ENCODE measurements at regions of chr7 and their contacts with region 1.

Region 1: DNA sequence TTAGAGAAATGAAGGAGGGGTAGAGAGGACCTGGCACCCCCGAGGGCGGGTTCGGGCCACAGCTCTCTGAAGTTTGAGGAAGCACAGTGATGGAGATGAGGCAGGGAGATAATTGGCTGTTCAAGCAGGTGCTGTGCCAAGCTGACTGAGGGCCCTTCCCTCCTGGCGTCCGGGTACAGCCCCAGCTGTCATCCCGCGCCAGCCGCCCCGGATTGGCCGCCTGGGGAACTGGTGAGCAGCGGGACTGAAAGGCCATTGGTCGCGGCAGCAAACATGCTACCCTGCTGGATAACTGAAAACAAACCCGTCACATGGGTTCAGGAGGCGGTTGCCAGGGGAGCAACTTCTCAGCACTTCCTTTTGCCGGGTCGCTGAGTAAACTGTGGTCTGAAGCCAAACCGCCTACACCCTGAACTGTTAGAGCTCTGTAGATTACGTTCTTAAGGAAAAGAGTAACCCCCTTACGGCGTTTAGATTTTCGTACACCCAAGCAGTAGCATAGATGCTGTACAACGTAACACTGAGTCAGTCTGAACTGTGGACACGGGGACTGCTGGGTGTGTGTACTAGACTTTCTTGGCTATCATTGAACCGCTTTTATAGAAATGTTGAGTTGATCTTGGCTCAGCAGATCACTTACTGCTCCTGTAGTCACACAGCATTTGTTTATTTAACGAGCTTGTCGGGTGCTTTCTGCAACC is 1.3 kb downstream of the INSIG1 start:
- DNase-seq: peak; percentile 92 to 96 (median 95)
- ATAC-seq: peak; percentile 85 to 92 (median 88)
- H3K4me3 ChIP-seq: peak overlapping the region; percentile 46 to 97 (median 90)
- H3K27ac ChIP-seq: peak overlapping the region; percentile 1 to 98 (median 92)
- H3K4me1 ChIP-seq: peaks cover 0 to 50% (median 27%) of the 10 kb centered on the region in 12 donors
- H3K27me3 ChIP-seq: no peaks in the 10 kb centered on the region
- CTCF ChIP-seq: peak in 2 of 12 donors; percentile 20 to 21
- POLR2A ChIP-seq: peak in 1 of 2 donors; percentile 59

Region 2: DNA sequence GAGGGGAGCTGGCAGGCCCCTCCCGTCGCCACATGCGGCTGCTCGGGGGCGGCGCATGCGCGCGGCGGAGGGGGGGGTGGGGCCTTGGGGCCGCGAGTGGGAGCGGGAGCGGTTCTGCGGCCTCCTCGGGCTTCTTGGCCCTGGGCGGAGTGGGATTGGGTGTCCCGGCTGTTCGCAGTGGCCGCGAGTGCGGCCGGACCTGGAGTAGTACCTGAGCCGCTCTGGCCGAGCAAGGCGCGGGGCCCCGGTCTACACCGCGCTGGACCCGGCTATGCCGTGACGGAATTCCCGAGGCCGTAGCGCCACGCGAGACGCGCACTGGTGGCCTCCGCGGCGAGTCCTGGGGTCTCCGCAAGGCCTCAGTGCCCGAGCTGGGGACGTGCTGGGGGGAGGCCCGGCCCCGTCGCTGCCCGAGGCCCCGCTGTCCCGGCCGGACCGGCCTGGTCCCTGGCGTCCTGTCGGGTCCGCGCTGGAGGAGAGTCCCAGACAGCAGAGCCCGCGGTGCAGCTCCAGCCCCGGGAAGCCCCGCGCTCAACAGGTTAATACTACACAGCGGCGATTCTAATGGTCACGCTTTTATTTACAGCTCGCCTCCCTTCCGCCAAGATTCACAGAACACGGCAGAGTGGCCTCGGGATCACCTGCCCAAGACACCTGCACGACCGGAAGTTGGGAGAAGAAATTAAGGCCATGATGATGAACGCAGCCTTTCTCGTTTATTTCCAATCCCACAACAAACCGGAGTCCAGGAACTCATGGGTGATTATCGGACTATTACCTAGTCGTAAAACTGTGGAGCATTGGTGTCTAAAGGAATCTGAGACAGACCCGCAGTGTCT is 295.4 kb before region 1 on chr7:
- intact Hi-C with region 1: loop called in 2 of 10 experiments (anchors 5 kb)
- DNase-seq: peak; percentile 78 to 90 (median 85)
- ATAC-seq: peak; percentile 90 to 98 (median 98)
- H3K4me3 ChIP-seq: peak overlapping the region; percentile 57 to 100 (median 95)
- H3K27ac ChIP-seq: peak overlapping the region; percentile 89 to 96 (median 92)
- H3K4me1 ChIP-seq: peaks cover 0 to 24% (median 15%) of the 10 kb centered on the region in 12 donors
- H3K27me3 ChIP-seq: no peaks in the 10 kb centered on the region
- CTCF ChIP-seq: no peak
- POLR2A ChIP-seq: peak in 1 of 2 donors; percentile 78

Region 3: DNA sequence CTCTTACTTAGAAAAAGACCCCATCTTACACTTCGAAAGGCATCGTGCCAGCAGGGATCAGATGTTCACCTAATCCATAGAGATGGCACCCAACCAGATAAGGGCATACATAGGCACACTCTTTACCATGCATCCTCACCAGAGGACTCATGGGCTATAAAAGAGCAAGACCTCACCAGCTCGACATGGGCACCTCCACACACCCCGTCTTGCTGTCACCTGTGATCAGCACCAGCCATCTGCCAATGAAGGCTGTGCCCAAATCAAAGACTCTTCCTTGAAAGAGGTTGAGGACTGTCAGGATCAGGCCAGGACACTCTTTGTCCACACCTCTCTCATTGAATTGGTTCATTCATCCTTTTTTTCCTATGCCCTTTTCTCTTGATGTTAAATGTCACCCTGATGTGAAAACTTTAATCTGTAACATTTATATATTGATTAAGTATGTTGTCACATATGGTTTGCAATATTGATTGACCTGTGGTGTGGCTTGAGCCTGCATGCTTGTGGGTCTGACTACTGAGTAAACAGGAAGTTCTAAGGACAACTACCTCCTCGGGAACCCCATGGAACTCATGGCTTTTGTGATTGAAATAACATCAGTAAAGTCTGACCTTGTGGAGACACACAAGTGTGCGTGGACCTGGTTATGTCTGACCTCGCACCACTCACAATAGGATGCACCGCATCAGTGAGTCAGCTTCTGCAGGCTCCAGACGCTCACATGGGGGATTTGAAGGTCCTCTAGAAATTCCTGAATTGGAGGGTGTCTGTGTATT is 153.3 kb before region 1 on chr7:
- intact Hi-C with region 1: no loop called
- DNase-seq: no peak
- ATAC-seq: no peak
- H3K4me3 ChIP-seq: no peak overlapping the region
- H3K27ac ChIP-seq: no peak overlapping the region
- H3K4me1 ChIP-seq: no peaks in the 10 kb centered on the region
- H3K27me3 ChIP-seq: peaks cover 0 to 16% (median 6%) of the 10 kb centered on the region in 9 donors
- CTCF ChIP-seq: no peak
- POLR2A ChIP-seq: no peak

Region 4: DNA sequence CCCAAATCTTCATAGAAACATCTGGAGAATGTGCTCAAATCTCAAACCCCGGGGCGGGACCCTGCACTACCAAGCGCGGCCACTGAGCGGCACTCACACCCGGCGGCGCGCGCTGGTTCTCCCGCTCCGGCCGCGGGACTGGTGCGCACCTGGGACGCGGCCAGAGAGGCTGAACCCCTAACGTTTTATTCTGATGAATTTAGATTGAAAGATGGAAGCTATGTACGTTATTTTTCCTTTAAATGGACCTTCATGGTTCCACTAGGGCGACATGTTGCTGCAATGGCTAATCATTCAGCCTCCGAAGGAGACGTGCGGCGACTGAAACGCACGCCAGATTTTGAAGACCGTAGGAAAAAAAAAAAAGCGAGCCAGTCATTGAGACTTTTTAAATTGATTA is 108.3 kb before region 1 on chr7:
- intact Hi-C with region 1: loop called in 6 of 10 experiments (anchors 1 to 10 kb)
- DNase-seq: peak in 1 of 5 donors; percentile 49
- ATAC-seq: peak in 3 of 4 donors; percentile 69 to 75 (median 73)
- H3K4me3 ChIP-seq: peak overlapping the region in 3 of 12 donors; percentile 9 to 22 (median 12)
- H3K27ac ChIP-seq: no peak overlapping the region
- H3K4me1 ChIP-seq: peaks cover 0 to 5% (median 2%) of the 10 kb centered on the region in 12 donors
- H3K27me3 ChIP-seq: peaks cover 0 to 19% (median 7%) of the 10 kb centered on the region in 9 donors
- CTCF ChIP-seq: peak; percentile 80 to 93 (median 85)
- POLR2A ChIP-seq: no peak

Region 5: DNA sequence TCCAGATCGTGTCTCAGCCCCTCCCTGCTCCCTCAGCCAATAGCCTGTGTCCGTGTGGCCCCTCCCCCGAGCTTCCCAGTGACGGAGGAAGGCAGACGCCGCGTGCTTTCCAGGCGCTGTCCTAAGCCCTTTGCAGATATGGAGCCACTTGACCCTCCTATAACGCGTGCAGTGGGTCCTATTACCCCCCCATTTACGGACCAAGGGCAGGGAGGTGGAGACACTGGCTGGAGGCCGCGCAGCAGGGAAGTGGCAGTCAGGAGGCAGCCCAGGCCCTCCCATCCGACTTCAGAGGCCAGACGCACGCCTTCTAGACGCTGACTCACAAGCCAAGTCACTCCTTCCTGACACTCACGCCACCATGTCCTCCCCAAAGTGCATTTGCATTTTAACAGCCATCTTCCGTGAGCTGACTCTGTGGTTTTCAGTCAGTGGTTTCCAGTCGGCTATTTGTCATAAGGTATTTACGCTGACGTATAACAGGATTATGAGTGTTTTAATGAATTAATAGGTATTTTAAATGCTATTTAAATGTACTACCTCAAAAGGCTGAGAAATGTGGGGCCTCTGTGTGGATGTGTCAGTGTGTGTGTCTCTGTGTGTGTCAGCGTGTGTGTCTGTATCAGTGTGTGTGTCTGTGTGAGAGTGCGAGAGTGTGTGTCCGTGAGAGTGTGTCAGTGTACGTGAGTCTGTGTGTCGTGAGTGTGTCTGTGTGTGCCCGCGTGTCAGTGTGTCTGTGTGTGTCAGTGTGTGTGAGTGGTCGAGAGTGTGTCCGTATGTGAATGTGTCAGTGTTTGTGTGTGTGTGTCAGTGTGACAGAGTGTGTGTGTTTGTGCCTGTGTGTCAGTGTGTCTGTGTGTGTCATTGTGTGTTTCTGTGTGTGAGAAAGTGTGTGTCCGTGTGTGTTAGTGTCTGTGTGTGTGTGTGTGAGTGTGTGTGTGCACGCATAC is 93.3 kb before region 1 on chr7:
- intact Hi-C with region 1: loop called in 6 of 10 experiments (anchors 1 to 5 kb)
- DNase-seq: peak; percentile 85 to 90 (median 88)
- ATAC-seq: peak; percentile 86 to 90 (median 87)
- H3K4me3 ChIP-seq: peak overlapping the region in 11 of 12 donors; percentile 16 to 58 (median 48)
- H3K27ac ChIP-seq: peak overlapping the region; percentile 74 to 97 (median 86)
- H3K4me1 ChIP-seq: peaks cover 0 to 22% (median 8%) of the 10 kb centered on the region in 12 donors
- H3K27me3 ChIP-seq: peaks cover 0 to 8% (median 0%) of the 10 kb centered on the region in 9 donors
- CTCF ChIP-seq: peak in 1 of 12 donors; percentile 14
- POLR2A ChIP-seq: peak in 1 of 2 donors; percentile 33

Region 6: GRCh38 chr7:155344600-155345433 is 45.8 kb after region 1 on chr7:
- intact Hi-C with region 1: loop called in 3 of 10 experiments (anchors 2 to 10 kb)
- DNase-seq: peak; percentile 67 to 91 (median 74)
- ATAC-seq: peak; percentile 67 to 99 (median 90)
- H3K4me3 ChIP-seq: peak overlapping the region in 10 of 12 donors; percentile 16 to 53 (median 42)
- H3K27ac ChIP-seq: no peak overlapping the region
- H3K4me1 ChIP-seq: peaks cover 0 to 10% (median 4%) of the 10 kb centered on the region in 12 donors
- H3K27me3 ChIP-seq: peaks cover 5 to 21% (median 7%) of the 10 kb centered on the region in 9 donors
- CTCF ChIP-seq: peak in 11 of 12 donors; percentile 65 to 97 (median 89)
- POLR2A ChIP-seq: peak in 1 of 2 donors; percentile 6

Measured in heart left ventricle (tissue), 16 donors.